PC-9 (cell line): ENCODE measurements at regions of chr5 and their contacts with region 1.

Region 1: DNA sequence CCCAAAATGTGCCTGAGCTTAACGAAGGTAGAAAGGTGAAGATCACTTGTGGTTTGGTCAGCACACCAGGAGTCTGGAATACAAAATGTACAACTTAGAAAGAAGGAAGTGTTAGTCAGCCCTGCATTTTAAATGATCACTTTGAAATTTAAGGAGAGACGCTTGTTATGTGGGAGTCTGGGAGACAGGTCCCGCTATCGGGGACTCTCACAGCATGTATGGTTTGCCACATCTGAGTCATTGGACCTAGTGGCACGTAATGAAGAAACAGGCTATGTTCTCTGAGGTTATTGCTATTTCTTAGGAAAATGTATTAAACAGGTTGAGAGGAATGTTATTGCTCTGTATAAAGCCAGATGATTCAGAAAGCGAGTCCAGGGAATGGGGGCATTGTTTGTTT is 2362.5 kb upstream of the WWC1 start:
- DNase-seq: no peak
- H3K4me3 ChIP-seq: no peak overlapping the region
- H3K27ac ChIP-seq: no peak overlapping the region
- H3K4me1 ChIP-seq: no peaks in the 10 kb centered on the region
- H3K27me3 ChIP-seq: no peaks in the 10 kb centered on the region
- CTCF ChIP-seq: no peak

Region 2: DNA sequence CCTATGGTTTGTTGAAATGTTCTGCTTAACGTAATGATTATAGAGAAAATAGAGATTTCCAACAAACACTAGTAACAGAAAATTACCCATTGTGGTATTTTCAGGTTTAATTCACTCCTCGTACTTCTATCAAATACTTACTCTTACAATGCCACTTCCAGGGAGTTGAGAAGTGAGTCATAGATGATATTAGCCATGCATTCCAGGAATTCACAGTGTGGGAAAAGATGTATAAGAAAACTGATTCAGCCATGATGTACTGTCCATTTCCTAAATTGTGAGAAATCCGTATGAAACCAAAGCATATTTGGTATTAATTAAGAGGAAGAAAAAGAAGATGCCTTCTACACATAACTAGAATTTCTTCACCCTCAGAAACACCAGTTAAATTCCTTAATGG is 507.9 kb after region 1 on chr5:
- CTCF ChIA-PET with region 1: no interaction called
- POLR2A ChIA-PET with region 1: no interaction called
- intact Hi-C with region 1: loop called (anchors 10 kb)
- DNase-seq: no peak
- H3K4me3 ChIP-seq: no peak overlapping the region
- H3K27ac ChIP-seq: no peak overlapping the region
- H3K4me1 ChIP-seq: no peaks in the 10 kb centered on the region
- H3K27me3 ChIP-seq: no peaks in the 10 kb centered on the region
- CTCF ChIP-seq: no peak